Activated CD4-positive, alpha-beta memory T cell treated with anti-CD3 and anti-CD28 coated beads for 36 hours (primary cell): ENCODE measurements at regions of chr16 and their contacts with region 1.

Region 1: DNA sequence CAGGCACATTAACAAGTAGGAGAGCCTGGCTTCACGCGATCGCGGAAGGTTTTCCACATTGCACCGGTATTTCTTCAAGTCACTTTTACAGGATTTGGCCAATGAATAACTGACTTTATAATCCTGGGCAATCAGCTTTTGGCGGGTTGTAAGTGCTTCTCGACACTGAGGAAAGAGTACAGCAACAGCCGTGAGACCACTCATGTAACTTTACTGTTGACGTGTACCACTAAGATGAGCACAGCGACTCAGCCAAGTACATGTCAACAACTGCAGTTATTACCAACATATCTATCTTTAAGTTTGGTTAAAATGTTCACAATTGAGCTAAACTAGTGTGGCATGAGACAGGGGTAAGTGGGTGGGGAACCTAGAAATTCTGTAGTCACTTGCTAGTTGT is 71.7 kb upstream of the CLEC18B start:
- DNase-seq: no peak
- H3K4me3 Mint-ChIP-seq: no peak overlapping the region
- H3K27ac Mint-ChIP-seq: no peak overlapping the region
- H3K4me1 Mint-ChIP-seq: peaks cover 2% of the 10 kb centered on the region
- H3K27me3 Mint-ChIP-seq: no peaks in the 10 kb centered on the region

Region 2: DNA sequence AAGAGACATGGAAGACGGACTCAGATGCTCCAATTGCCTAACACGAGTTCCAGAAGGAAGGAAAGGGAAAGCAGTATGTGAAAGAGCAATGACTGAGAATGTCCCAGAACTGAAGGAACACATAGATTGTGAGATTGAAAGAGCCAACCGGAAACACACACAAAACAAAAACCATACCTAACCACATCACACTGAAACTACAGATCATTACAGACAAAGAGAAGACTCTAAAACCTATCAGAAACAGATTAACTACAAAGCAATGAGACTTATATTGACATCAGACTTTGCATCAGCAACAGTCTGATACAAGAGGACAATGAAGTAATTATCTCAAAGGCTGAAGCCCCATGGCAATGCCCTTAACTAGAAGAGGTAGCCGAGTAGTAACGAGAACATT is 26.1 kb before region 1 on chr16:
- CTCF ChIA-PET with region 1: no interaction called
- POLR2A ChIA-PET with region 1: interaction called, 4 read pairs
- intact Hi-C with region 1: loop called (anchors 2 kb)
- DNase-seq: no peak
- H3K4me3 Mint-ChIP-seq: no peak overlapping the region
- H3K27ac Mint-ChIP-seq: peak overlapping the region; percentile 50
- H3K4me1 Mint-ChIP-seq: peaks cover 32% of the 10 kb centered on the region
- H3K27me3 Mint-ChIP-seq: no peaks in the 10 kb centered on the region

Region 3: DNA sequence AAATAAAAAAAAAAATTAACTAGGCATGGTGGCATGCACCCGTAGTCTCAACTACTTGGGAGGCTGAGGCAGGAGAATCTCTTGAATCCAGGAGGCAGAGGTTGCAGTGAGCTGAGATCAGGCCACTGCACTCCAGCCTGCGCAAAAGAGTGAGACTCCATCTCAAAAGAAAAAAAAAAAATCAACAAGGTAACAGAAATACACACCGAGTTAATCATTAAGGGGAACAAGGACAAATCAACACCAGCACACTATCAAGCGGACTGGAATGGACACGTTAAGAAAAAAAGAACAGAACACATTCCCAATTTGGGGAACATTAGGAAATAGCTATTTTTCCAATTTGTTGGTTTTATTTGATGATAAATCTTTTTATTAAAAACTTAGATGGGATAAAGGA is 142.3 kb after region 1 on chr16:
- CTCF ChIA-PET with region 1: no interaction called
- POLR2A ChIA-PET with region 1: no interaction called
- intact Hi-C with region 1: no loop called
- DNase-seq: no peak
- H3K4me3 Mint-ChIP-seq: no peak overlapping the region
- H3K27ac Mint-ChIP-seq: no peak overlapping the region
- H3K4me1 Mint-ChIP-seq: no peaks in the 10 kb centered on the region
- H3K27me3 Mint-ChIP-seq: no peaks in the 10 kb centered on the region